A673 (cell line): ENCODE measurements at regions of chr1 and their contacts with region 1.

Region 1: GRCh38 chr1:46442317-46443161 is 47.1 kb upstream of the DMBX1 start:
- DNase-seq: peak; percentile 92
- H3K4me3 ChIP-seq: no peak overlapping the region
- H3K27ac ChIP-seq: no peak overlapping the region
- H3K4me1 ChIP-seq: no peaks in the 10 kb centered on the region
- H3K27me3 ChIP-seq: peaks cover 6% of the 10 kb centered on the region
- CTCF ChIP-seq: peak; percentile 85

Region 2: GRCh38 chr1:46547481-46548383 is 105.2 kb after region 1 on chr1:
- CTCF ChIA-PET with region 1: interaction called, 4 read pairs
- POLR2A ChIA-PET with region 1: no interaction called
- intact Hi-C with region 1: loop called (anchors 5 kb)
- DNase-seq: peak; percentile 80
- H3K4me3 ChIP-seq: no peak overlapping the region
- H3K27ac ChIP-seq: no peak overlapping the region
- H3K4me1 ChIP-seq: no peaks in the 10 kb centered on the region
- H3K27me3 ChIP-seq: peaks cover 38% of the 10 kb centered on the region
- CTCF ChIP-seq: peak; percentile 74